ENCODE measurements at regions of chr19 and their contacts with region 1.

Region 1: DNA sequence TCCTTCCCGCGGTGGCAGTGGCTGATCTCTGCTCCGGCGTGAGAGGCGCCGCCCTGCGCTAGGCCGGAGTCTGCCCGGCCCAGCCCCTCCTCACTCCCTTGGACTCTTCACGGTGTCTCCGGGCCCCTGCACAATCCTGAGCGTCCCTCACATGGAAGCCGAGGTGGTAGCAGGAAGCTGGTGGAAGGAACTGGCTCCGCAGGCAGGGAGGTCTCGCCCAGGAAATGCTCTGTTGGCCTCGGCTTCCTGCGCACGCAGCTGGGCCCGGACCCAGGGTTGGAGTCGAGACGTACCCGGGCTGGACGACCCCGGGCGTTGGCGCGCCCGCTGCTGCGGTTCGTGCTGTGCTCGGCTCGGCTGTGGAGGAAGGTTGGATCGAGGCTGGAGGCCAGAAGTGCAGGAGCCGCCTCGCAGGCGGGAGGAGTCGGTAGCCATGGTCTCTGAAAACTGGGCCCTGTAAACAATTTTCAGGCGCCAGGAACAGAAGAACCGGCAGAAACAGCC is 46.3 kb downstream of the ZNF724 start:
- DNase-seq: no peak
- ATAC-seq: no peak
- H3K4me3 ChIP-seq: no peak overlapping the region
- H3K27ac ChIP-seq: no peak overlapping the region
- H3K4me1 ChIP-seq: no peaks in the 10 kb centered on the region
- H3K27me3 ChIP-seq: no peaks in the 10 kb centered on the region
- CTCF ChIP-seq: no peak

Region 2: DNA sequence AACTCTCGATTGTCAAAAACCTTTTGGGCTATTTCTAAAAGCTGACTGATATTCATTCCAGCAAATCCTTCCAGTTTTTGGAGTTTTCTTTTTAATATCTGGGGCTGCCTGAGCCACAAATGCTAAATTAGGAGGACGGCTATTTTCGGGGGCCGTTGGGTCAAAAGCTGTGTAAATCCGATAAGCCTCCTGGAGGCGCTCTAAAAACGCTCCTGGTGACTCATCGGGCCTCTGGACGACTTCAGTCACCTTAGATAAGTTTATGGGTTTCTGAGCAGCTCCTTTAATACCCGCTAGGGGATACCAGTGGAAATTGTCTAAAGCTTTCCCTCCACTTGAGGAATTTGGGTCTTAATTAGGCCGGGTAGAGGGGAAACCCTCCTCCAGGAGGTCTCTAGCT is 20.6 kb before region 1 on chr19:
- CTCF ChIA-PET with region 1: interaction called, 11 read pairs
- POLR2A ChIA-PET with region 1: no interaction called
- in situ Hi-C with region 1: no loop called
- intact Hi-C with region 1: no loop called
- DNase-seq: no peak
- ATAC-seq: no peak
- H3K4me3 ChIP-seq: no peak overlapping the region
- H3K27ac ChIP-seq: no peak overlapping the region
- H3K4me1 ChIP-seq: no peaks in the 10 kb centered on the region
- H3K27me3 ChIP-seq: no peaks in the 10 kb centered on the region
- CTCF ChIP-seq: no peak

Region 3: GRCh38 chr19:23286477-23286876 is 82.6 kb after region 1 on chr19:
- CTCF ChIA-PET with region 1: no interaction called
- POLR2A ChIA-PET with region 1: no interaction called
- in situ Hi-C with region 1: no loop called
- intact Hi-C with region 1: no loop called
- DNase-seq: no peak
- ATAC-seq: no peak
- H3K4me3 ChIP-seq: no peak overlapping the region
- H3K27ac ChIP-seq: no peak overlapping the region
- H3K4me1 ChIP-seq: no peaks in the 10 kb centered on the region
- H3K27me3 ChIP-seq: no peaks in the 10 kb centered on the region
- CTCF ChIP-seq: peak; percentile 32; the same call in 1 of the 2 replicates

Measured in Panc1 (cell line).